K562 (cell line): ENCODE measurements at regions of chr19 and their contacts with region 1.

Region 1: DNA sequence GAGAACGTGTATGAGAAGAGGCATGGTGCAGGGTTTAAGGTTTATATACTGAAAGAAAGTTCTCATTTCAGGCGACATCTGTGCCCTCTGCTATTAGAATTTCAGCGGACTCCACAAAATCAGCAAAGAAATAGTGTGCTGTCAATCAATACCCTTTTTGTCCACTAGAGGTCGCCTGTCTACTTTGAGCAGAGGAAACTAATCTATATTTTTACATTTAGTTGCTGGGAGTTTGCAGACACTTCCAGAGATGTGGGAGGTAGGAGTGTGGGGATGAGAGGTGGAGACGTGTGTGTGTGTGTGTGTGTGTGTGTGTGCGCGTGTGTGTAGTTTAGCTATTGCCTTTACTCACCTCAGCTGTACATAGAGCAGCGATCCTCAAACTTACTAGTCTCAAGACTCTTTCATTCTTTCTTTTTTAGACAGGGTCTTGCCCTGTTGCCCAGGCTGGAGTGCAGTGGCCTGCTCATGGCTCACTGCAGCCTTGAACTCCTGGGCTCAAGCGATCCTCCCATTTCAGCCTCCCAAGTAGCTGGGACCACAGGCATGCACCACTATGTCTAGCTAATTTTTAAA is 9.7 kb downstream of the INAFM1 start:
- DNase-seq: peak; percentile 34 to 79 (median 43)
- ATAC-seq: peak; percentile 44; the same call in 2 of the 3 replicates
- H3K4me3 ChIP-seq: no peak overlapping the region
- H3K27ac ChIP-seq: no peak overlapping the region
- H3K4me1 ChIP-seq: peaks cover 2 to 6% of the 10 kb centered on the region in 2 experiments; a peak in 4 of 5 replicates
- H3K27me3 ChIP-seq: no peaks in the 10 kb centered on the region
- CTCF ChIP-seq: peak; percentile 73 to 87 (median 79)
- EP300 ChIP-seq: no peak
- POLR2A ChIP-seq: no peak
- RAD21 ChIP-seq: peak; percentile 26 to 67

Region 2: DNA sequence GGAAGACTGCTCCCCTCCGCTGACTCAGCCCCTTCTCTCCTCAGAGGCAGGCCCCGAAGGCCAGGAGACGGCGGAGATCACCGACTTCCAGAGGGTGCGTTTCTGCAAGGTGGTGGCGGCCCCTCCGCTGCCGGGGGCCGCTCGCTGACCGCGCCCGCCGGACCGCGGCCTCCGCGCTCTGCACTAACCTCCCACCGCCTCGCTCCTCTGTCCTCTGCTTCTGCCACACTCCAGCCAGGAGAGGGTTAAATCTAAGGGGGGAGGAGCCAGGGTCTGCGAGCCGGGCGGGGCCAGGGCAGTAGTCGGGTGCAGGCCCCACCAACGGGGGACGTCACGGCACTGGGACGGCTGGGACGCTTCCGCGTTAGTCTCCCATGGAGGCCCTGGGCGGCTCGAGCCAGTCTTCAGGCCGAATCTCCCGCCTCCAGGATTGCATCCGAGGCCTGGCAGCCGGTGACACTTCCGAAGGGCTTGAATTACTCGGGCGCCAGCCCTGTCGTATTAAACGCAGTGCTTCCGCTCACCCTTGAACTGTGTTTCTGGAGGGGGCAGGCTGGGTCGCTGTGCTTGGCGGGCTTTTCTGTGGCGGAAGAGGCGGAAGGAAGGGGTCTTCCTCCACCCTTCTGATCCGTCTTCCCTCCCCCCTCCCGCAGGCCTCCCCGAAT is 11.0 kb before region 1 on chr19:
- CTCF ChIA-PET with region 1: no interaction called
- POLR2A ChIA-PET with region 1: interaction called, 13 read pairs
- in situ Hi-C with region 1: no loop called
- intact Hi-C with region 1: no loop called
- DNase-seq: peak; percentile 85 to 97 (median 89)
- ATAC-seq: peak; percentile 85
- H3K4me3 ChIP-seq: peak overlapping the region; percentile 74
- H3K27ac ChIP-seq: peak overlapping the region; percentile 95
- H3K4me1 ChIP-seq: peaks cover 33 to 67% of the 10 kb centered on the region in 2 experiments
- H3K27me3 ChIP-seq: no peaks in the 10 kb centered on the region
- CTCF ChIP-seq: no peak
- EP300 ChIP-seq: no peak
- POLR2A ChIP-seq: peak; percentile 92
- RAD21 ChIP-seq: no peak

Region 3: GRCh38 chr19:47391510-47392223 is 107.3 kb after region 1 on chr19:
- CTCF ChIA-PET with region 1: interaction called, 8 read pairs
- POLR2A ChIA-PET with region 1: no interaction called
- in situ Hi-C with region 1: no loop called
- intact Hi-C with region 1: loop called (anchors 2 kb)
- DNase-seq: peak; percentile 76 to 85 (median 83)
- ATAC-seq: peak; percentile 96
- H3K4me3 ChIP-seq: no peak overlapping the region
- H3K27ac ChIP-seq: no peak overlapping the region
- H3K4me1 ChIP-seq: no peaks in the 10 kb centered on the region; a peak in 1 of 5 replicates
- H3K27me3 ChIP-seq: peaks cover 8 to 13% of the 10 kb centered on the region in 2 experiments; a peak in 4 of 5 replicates
- CTCF ChIP-seq: peak; percentile 88 to 94 (median 93)
- EP300 ChIP-seq: no peak
- POLR2A ChIP-seq: no peak
- RAD21 ChIP-seq: peak; percentile 78 to 90

Region 4: DNA sequence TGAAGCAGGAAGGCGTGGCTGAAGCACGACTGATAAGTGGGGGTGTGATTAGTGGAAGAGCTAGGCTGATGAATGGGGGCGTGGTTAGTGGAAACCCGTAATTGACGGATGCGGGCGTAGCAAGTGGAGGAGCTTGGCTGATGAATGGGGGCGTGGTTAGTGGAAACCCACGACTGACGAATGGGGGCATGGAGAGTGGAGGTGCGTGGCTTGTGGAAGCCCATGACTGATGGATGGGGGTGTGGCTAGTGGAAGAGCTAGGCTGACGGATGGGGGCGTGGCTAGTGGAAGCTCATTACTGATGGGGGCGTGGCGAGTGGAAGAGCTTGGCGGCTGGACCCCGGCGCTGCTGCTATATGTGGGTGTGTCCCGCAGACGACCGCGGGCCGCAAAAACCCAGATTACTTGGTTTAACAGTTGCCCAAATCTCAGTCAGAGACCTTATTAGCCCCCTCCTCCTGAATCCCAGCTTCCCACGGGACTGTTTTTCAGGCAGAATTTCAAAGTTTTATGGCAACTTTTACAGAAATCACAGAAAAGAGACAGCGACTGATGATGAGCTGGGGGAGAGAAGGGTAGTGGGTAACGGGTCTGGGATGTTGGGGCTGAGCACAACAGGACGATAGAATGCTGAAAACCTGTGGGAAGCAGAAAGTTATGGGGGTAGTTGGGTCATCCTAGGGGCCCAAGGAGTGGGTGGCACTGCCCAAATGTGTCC is 143.9 kb after region 1 on chr19:
- CTCF ChIA-PET with region 1: no interaction called
- POLR2A ChIA-PET with region 1: interaction called, 3 read pairs
- in situ Hi-C with region 1: no loop called
- intact Hi-C with region 1: loop called (anchors 5 kb)
- DNase-seq: peak; percentile 96 to 98 (median 96)
- ATAC-seq: peak; percentile 96
- H3K4me3 ChIP-seq: peak overlapping the region; percentile 1; the same call in 1 of the 2 replicates
- H3K27ac ChIP-seq: no peak overlapping the region; the same call in 2 of the 3 replicates
- H3K4me1 ChIP-seq: peaks cover 11 to 38% of the 10 kb centered on the region in 2 experiments; a peak in 3 of 5 replicates
- H3K27me3 ChIP-seq: peaks cover 8 to 13% of the 10 kb centered on the region in 2 experiments; a peak in 4 of 5 replicates
- CTCF ChIP-seq: no peak
- EP300 ChIP-seq: no peak; the same call in 1 of the 2 replicates
- POLR2A ChIP-seq: no peak
- RAD21 ChIP-seq: no peak

Region 5: GRCh38 chr19:47456721-47457478 is 172.5 kb after region 1 on chr19:
- CTCF ChIA-PET with region 1: no interaction called
- POLR2A ChIA-PET with region 1: no interaction called
- in situ Hi-C with region 1: no loop called
- intact Hi-C with region 1: no loop called
- DNase-seq: no peak
- ATAC-seq: no peak
- H3K4me3 ChIP-seq: no peak overlapping the region
- H3K27ac ChIP-seq: no peak overlapping the region
- H3K4me1 ChIP-seq: peaks cover 0 to 9% of the 10 kb centered on the region in 2 experiments; a peak in 1 of 5 replicates
- H3K27me3 ChIP-seq: peaks cover 18 to 50% of the 10 kb centered on the region in 2 experiments
- CTCF ChIP-seq: no peak
- EP300 ChIP-seq: no peak
- POLR2A ChIP-seq: no peak
- RAD21 ChIP-seq: no peak